A549 (cell line): ENCODE measurements at regions of chr7 and their contacts with region 1.

Region 1: DNA sequence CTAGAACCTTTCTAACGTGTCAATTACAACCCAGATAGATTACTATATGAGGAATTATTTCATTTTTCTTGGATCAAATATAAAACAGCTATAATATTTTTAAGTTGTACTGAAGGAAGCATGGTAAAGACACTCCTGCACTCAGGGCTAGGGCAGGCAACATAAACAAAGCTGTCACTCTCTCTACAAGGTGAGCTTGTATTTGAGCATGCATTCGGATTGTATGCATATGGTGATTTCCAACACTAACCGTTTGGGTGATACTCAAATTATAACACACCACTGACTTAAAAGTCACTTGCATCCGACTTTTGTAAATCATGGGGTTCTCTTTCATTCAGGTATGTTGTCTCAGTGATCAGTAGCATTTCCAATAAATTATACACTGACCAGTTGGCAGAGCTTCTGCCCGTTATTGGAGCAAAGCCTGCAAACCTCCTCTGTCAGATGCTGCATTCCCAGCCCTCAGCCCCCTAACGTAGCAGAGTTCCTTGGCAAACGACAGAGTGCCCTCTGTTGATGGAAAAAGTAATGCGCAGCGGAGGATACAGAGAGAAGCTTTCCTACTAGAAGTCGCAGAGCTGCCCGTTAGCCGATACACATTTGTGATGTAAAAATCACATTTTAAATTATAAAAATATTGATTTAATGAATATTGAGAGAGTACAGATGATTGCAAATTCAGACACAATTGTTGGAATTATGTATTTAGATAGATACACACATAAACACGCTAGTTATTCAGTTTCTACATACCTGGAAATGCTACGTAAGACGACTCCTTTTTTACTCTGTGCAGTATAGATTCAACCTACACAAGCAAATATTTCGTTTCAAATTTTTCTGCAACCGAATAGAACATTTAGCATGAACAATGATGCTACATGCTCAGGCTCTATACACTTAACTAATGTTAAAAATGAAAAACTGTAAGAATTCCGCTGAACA is 173.9 kb upstream of the SP4 start:
- DNase-seq: peak; percentile 25 to 50
- ATAC-seq: peak; percentile 85 to 95
- H3K4me3 ChIP-seq: no peak overlapping the region
- H3K27ac ChIP-seq: no peak overlapping the region
- H3K4me1 ChIP-seq: no peaks in the 10 kb centered on the region
- CTCF ChIP-seq: peak; percentile 62
- EP300 ChIP-seq: no peak
- POLR2A ChIP-seq: no peak
- RAD21 ChIP-seq: peak; percentile 61 to 66

Region 2: DNA sequence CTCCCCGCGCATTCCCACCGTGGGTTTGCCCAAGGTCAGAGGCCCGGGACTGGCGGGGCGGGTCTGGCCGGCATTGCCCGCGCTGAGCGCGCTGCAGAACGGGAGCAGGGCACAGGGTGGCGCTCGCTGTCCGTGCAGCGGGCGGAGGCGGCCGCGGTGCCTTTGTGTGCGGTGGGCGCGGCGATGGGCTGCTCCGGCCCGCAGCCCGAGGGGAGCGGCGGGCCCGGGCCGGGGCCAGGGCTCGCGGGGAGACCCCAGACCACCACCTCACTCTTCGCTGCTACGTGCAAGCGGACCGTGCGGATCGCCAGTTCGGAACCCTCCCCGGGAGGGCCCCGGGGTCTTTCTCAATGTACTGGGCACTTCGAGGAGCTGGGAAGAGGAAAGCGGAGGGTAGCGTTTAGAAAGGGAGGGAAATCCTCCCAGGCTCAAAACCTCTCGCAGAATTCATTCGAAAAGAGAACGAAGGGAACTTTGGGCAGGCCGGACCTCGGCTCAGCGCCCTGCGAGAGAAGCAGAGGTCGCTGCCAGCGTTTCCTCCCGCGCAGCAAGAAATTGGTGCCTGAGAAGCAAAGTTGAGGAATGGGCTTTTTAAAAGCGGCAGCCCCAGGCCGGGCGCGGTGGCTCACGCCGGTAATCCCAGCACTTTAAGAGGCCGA is 475.8 kb before region 1 on chr7:
- CTCF ChIA-PET with region 1: interaction called, 36 read pairs
- POLR2A ChIA-PET with region 1: no interaction called
- DNase-seq: peak; percentile 36 to 37
- ATAC-seq: peak; percentile 99 to 100
- H3K4me3 ChIP-seq: peak overlapping the region; percentile 61
- H3K27ac ChIP-seq: peak overlapping the region; percentile 37 to 40; a peak in 3 of 6 replicates
- H3K4me1 ChIP-seq: peaks cover 6% of the 10 kb centered on the region; the same call in 1 of the 3 replicates
- CTCF ChIP-seq: peak; percentile 83
- EP300 ChIP-seq: no peak
- POLR2A ChIP-seq: no peak
- RAD21 ChIP-seq: peak; percentile 68 to 94

Region 3: GRCh38 chr7:20783700-20784387 is 470.2 kb before region 1 on chr7:
- CTCF ChIA-PET with region 1: interaction called, 36 read pairs
- POLR2A ChIA-PET with region 1: no interaction called
- DNase-seq: no peak
- ATAC-seq: peak; percentile 25 to 61; a peak in 3 of 6 replicates
- H3K4me3 ChIP-seq: no peak overlapping the region
- H3K27ac ChIP-seq: no peak overlapping the region
- H3K4me1 ChIP-seq: peaks cover 19% of the 10 kb centered on the region; the same call in 2 of the 3 replicates
- CTCF ChIP-seq: no peak
- EP300 ChIP-seq: no peak
- POLR2A ChIP-seq: no peak
- RAD21 ChIP-seq: no peak

Region 4: DNA sequence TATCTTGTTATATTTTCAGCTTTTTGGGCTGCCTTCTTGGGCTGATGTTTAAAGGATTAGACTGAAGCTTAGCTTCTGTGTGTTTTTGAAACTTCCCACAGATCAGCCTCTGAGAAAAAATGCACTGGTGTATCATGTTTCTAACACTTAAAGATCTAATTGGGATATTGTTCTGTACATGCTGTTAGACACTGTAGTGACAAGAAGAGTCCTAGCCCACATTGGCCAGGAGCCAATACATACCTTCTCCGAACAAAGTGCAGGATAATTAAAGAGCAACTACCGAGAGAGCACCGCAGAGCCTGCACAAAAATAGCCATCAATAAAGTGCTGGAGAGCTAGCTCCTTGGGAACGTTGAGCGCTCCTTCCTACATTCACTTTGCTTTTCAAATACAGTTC is 178.0 kb before region 1 on chr7:
- CTCF ChIA-PET with region 1: no interaction called
- POLR2A ChIA-PET with region 1: no interaction called
- DNase-seq: no peak
- ATAC-seq: no peak
- H3K4me3 ChIP-seq: no peak overlapping the region
- H3K27ac ChIP-seq: no peak overlapping the region
- H3K4me1 ChIP-seq: no peaks in the 10 kb centered on the region
- CTCF ChIP-seq: no peak
- EP300 ChIP-seq: no peak
- POLR2A ChIP-seq: no peak
- RAD21 ChIP-seq: no peak